Esophagus muscularis mucosa (tissue), 4 donors: ENCODE measurements at regions of chr12 and their contacts with region 1.

Region 1: GRCh38 chr12:18643681-18644080 is 94.1 kb downstream of the PLCZ1 start:
- DNase-seq: no peak
- H3K4me3 ChIP-seq: no peak overlapping the region
- H3K27ac ChIP-seq: no peak overlapping the region
- H3K4me1 ChIP-seq: peaks cover 0 to 17% (median 14%) of the 10 kb centered on the region in 4 donors
- H3K27me3 ChIP-seq: no peaks in the 10 kb centered on the region
- CTCF ChIP-seq: no peak
- EP300 ChIP-seq: no peak
- POLR2A ChIP-seq: no peak

Region 2: DNA sequence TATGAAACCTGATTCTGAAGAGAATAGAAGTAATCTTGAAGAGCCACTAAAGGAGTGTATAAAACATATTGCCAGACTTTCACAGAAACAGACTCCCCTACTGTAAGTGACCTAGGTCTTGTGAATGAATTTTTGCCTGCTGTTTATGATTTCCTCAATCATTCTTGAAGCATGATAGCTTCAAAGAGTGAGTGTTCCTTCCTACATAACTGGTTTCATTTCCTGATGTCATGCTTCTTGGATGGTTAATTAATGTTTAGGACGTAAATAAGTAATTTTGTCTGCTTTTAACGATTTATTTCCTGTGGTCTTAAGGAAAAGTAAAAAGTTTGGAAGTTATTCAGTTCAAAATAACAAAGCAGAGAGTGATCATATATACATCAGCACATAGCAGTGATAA is 252.5 kb before region 1 on chr12:
- intact Hi-C with region 1: no loop called
- DNase-seq: no peak
- H3K4me3 ChIP-seq: no peak overlapping the region
- H3K27ac ChIP-seq: no peak overlapping the region
- H3K4me1 ChIP-seq: no peaks in the 10 kb centered on the region
- H3K27me3 ChIP-seq: no peaks in the 10 kb centered on the region
- CTCF ChIP-seq: no peak
- EP300 ChIP-seq: no peak
- POLR2A ChIP-seq: no peak

Region 3: GRCh38 chr12:18629916-18630315 is 13.8 kb before region 1 on chr12:
- intact Hi-C with region 1: loop called (anchors 1 kb)
- DNase-seq: no peak
- H3K4me3 ChIP-seq: no peak overlapping the region
- H3K27ac ChIP-seq: no peak overlapping the region
- H3K4me1 ChIP-seq: no peaks in the 10 kb centered on the region
- H3K27me3 ChIP-seq: no peaks in the 10 kb centered on the region
- CTCF ChIP-seq: no peak
- EP300 ChIP-seq: no peak
- POLR2A ChIP-seq: no peak